Endothelial cell of umbilical vein (primary cell): ENCODE measurements at regions of chr6 and their contacts with region 1.

Region 1: DNA sequence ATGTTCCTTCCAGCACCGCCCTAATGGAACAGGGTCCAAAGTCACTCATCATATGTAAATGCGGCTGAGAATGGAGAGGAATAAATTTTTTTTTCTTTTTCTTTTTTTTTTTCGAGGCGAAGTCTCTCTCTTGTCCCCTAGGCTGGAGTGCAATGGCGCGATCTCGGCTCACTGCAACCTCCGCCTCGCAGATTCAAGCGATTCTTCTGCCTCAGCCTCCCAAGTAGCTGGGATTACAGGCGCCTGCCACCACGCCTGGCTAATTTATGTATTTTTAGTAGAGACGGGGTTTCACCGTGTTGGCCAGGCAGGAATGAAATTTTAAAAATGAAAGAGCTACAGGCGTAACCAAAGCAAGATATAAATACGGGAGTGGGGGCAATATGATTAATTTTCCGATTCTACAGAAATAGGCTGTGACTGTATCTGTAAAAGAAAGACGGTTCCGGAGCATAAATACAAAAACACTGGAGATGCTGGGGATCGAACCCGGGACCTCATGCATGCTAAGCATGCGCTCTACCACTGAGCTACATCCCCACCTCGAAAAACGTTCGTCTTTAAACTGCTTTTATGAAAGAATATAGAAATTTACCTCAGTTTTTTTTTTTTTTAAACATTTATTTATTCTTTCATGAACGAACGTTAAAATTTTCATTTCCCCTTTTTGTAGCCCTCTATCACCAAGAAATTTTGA is 132.2 kb downstream of the GPX5 start:
- DNase-seq: peak; percentile 68
- H3K4me3 ChIP-seq: peak overlapping the region; percentile 28 to 86 (median 83)
- H3K27ac ChIP-seq: no peak overlapping the region
- H3K4me1 ChIP-seq: peaks cover 8% of the 10 kb centered on the region
- H3K27me3 ChIP-seq: peaks cover 20 to 33% of the 10 kb centered on the region in 2 experiments
- CTCF ChIP-seq: no peak
- POLR2A ChIP-seq: no peak

Region 2: DNA sequence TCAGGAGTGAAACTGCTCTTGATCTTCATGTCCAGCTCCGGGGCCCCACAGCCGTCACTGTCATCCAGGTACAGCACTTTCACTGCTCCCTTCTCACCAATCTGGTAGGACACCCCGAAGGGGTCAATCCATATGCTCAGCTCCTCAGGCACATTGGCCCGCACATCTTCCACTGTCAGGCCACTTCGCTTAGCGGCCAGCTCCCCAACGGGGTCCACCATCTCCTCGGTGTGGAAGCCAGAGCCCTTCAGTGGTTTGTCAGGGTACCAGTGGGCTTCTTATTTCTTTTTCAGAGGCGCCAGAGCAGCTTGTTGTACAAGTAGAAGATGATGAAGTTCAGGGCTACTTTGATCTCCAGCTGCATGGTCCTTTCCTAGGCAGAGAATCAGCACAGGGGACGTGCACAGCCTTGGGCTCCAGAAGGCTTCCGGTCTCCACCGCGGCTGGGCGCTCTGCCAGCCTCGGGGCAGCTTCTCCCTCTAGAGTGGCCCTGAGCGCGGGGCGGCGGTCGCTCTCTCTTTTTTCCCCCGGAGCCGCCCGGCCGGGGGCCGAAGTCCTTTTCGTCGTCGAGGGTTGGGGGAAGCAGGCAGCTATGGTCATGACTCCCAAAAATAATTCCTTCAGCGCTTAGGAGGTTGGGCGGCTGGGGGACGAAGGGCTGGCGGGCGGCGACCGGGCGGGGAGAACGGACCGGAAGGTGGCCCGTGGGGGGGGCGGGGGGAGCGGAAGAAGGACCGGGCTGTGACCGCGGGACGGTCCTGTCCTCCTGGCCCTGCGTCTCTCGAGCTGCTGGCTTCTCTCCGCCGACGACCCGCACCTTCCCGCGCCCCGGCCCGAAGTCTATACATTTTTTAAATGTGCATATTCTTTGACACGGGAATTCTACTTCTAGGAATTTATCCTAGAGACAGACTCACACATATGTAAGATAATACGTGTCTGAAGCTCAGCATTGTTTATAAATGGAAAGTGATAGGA is 439.4 kb before region 1 on chr6:
- CTCF ChIA-PET with region 1: no interaction called
- POLR2A ChIA-PET with region 1: no interaction called
- dilution Hi-C with region 1: no loop called
- intact Hi-C with region 1: loop called (anchors 10 kb)
- DNase-seq: peak; percentile 59
- H3K4me3 ChIP-seq: peak overlapping the region; percentile 40 to 60 (median 53)
- H3K27ac ChIP-seq: peak overlapping the region; percentile 21
- H3K4me1 ChIP-seq: peaks cover 3% of the 10 kb centered on the region
- H3K27me3 ChIP-seq: peaks cover 10 to 21% of the 10 kb centered on the region in 2 experiments
- CTCF ChIP-seq: no peak
- POLR2A ChIP-seq: no peak

Region 3: GRCh38 chr6:28673800-28674671 is 16.1 kb after region 1 on chr6:
- CTCF ChIA-PET with region 1: interaction called, 3 read pairs
- POLR2A ChIA-PET with region 1: no interaction called
- dilution Hi-C with region 1: no loop called
- intact Hi-C with region 1: loop called (anchors 1 kb)
- DNase-seq: peak; percentile 70
- H3K4me3 ChIP-seq: peak overlapping the region; percentile 1 to 74 (median 3)
- H3K27ac ChIP-seq: no peak overlapping the region
- H3K4me1 ChIP-seq: peaks cover 8% of the 10 kb centered on the region
- H3K27me3 ChIP-seq: peaks cover 5 to 6% of the 10 kb centered on the region in 2 experiments
- CTCF ChIP-seq: no peak
- POLR2A ChIP-seq: no peak

Region 4: DNA sequence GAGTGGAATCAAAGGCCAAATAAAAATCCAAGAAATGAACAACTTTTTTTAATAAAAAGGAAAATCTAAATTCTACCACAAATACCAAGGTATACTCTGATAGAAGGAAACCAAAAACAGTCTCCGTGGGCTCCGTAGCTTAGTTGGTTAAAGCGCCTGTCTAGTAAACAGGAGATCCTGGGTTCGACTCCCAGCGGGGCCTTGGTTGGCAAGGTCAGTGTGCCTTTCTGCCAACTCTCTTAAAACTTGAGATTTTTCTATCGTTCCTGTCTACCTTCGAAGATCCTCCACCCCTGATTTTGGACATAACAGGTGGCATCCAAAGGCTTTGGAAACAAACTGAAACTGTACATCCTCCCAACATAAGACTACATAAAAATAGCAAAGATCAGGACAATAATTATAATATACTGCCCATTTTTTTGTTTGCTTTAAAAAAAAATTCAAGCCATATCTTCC is 68.0 kb after region 1 on chr6:
- CTCF ChIA-PET with region 1: no interaction called
- POLR2A ChIA-PET with region 1: no interaction called
- dilution Hi-C with region 1: no loop called
- intact Hi-C with region 1: loop called (anchors 5 kb)
- DNase-seq: no peak
- H3K4me3 ChIP-seq: no peak overlapping the region
- H3K27ac ChIP-seq: no peak overlapping the region
- H3K4me1 ChIP-seq: peaks cover 4% of the 10 kb centered on the region
- H3K27me3 ChIP-seq: peaks cover 9 to 12% of the 10 kb centered on the region in 2 experiments
- CTCF ChIP-seq: no peak
- POLR2A ChIP-seq: no peak

Region 5: DNA sequence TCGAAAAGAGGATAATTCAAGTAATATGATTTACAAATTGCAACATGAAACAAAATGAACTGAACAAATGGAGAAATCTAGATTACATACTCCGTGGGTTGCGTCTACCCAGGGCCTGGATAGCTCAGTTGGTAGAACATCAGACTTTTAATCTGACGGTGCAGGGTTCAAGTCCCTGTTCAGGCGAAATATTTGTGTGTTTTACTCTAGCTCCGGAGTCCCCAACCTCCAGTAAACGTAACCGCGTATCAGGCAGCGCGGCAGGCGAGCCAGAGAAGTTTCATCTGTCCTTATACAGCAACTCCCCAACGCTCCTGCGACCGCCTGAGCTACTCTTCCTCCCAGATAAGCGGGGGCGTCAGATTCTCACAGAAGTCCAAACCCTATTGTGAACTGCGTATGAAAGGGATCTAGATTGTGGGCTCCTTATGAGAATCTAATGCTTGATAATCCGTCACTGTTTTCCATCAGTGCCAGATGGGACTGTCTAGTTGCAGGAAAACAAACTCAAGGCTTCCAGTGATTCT is 89.8 kb after region 1 on chr6:
- CTCF ChIA-PET with region 1: no interaction called
- POLR2A ChIA-PET with region 1: no interaction called
- dilution Hi-C with region 1: no loop called
- intact Hi-C with region 1: no loop called
- DNase-seq: peak; percentile 17
- H3K4me3 ChIP-seq: no peak overlapping the region
- H3K27ac ChIP-seq: no peak overlapping the region
- H3K4me1 ChIP-seq: no peaks in the 10 kb centered on the region
- H3K27me3 ChIP-seq: peaks cover 3 to 6% of the 10 kb centered on the region in 2 experiments
- CTCF ChIP-seq: no peak
- POLR2A ChIP-seq: no peak